ENCODE measurements at regions of chr17 and their contacts with region 1.

Region 1: DNA sequence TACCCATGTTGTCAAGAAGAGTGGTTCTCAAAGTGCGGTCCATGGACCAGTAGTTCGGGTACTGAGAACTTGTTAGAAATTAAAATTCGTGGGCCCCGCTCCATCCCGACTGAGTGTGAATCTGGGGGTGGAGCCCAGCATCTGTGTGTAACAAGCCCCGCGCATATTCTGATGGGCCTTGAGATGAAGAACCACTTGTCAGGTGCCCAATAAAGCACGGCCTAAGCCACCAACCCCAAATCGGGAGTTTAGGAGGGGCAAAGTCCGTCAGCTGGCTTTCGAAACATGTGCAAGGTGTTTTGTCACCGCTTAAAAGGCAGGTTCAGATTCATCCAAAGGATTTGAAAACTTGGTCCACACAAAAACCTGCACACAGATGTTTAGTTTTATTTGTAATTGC is 29.5 kb downstream of the PSMD12 start:
- DNase-seq: no peak
- ATAC-seq: no peak
- H3K4me3 Mint-ChIP-seq: no peak overlapping the region
- H3K27ac Mint-ChIP-seq: no peak overlapping the region
- H3K4me1 Mint-ChIP-seq: no peaks in the 10 kb centered on the region
- H3K27me3 Mint-ChIP-seq: no peaks in the 10 kb centered on the region
- CTCF ChIP-seq: no peak

Region 2: DNA sequence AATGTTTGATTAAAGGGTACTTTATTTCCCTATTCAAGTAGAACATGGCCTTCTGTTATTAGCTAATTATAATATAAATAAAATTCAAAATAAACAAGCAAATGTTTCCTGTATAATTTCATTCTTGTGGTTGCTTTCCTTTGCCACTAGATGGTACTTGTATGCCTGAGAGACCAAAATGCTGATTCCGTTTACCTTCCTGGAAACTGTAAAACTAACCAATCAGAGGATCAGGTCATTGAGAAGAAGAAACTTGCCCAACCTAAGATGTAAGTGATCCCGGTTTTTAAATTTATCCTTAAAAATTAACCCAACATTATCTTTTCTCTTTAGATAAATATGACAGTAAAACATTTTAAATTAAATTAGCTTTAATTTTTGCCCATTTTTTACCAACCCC is 1998.2 kb after region 1 on chr17:
- CTCF ChIA-PET with region 1: no interaction called
- POLR2A ChIA-PET with region 1: interaction called, 11 read pairs
- intact Hi-C with region 1: no loop called
- DNase-seq: no peak
- ATAC-seq: no peak
- H3K4me3 Mint-ChIP-seq: no peak overlapping the region
- H3K27ac Mint-ChIP-seq: no peak overlapping the region
- H3K4me1 Mint-ChIP-seq: no peaks in the 10 kb centered on the region
- H3K27me3 Mint-ChIP-seq: peaks cover 13% of the 10 kb centered on the region
- CTCF ChIP-seq: no peak